CD4-positive, alpha-beta memory T cell (primary cell): ENCODE measurements at regions of chr1 and their contacts with region 1.

Region 1: DNA sequence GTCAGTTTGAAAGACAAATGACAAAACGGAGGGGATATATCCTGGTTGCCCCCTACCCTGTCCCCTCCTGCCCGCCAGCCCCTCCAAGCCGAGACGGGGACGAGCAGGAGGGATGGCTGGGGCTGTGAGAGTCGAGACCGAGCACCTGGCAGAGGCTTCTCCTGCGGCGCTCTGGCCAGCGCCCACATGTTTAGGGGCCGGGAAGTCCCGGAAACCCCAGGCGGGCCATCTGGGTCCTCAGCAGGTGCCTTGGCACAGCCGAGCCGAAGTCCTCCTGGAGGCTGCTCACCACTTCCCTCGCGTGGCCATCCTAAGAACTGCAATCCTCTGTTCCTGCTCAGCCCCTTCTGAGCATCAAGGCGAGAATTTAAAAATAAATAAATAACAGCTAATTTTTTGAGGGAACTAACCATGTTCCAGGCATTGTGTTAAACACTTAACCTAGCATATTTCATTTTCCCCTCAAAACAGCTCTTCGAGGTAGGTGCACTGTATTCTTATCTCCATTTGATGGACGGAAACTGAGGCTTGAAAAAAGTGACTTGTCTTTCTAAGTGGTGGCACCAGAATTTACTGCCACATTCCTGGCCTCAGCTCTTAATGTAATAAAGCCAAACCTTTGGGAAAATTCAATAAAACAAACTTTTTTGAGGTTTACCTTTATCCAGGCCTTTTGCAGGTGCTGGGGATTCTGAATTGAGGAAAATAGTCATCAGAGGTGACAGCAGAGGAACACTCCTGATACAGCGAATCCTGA is 3.5 kb upstream of the RIMS3 start:
- DNase-seq: peak; percentile 73 to 78 (median 76)
- H3K4me3 ChIP-seq: peak overlapping the region in 1 of 2 donors; percentile 38
- H3K4me3 Mint-ChIP-seq: peak overlapping the region in 6 of 8 donors; percentile 10 to 78 (median 53)
- H3K27ac ChIP-seq: no peak overlapping the region
- H3K27ac Mint-ChIP-seq: no peak overlapping the region
- H3K4me1 ChIP-seq: peaks cover 21% of the 10 kb centered on the region
- H3K4me1 Mint-ChIP-seq: peaks cover 4 to 28% (median 13%) of the 10 kb centered on the region in 4 donors
- H3K27me3 ChIP-seq: no peaks in the 10 kb centered on the region
- H3K27me3 Mint-ChIP-seq: no peaks in the 10 kb centered on the region

Region 2: DNA sequence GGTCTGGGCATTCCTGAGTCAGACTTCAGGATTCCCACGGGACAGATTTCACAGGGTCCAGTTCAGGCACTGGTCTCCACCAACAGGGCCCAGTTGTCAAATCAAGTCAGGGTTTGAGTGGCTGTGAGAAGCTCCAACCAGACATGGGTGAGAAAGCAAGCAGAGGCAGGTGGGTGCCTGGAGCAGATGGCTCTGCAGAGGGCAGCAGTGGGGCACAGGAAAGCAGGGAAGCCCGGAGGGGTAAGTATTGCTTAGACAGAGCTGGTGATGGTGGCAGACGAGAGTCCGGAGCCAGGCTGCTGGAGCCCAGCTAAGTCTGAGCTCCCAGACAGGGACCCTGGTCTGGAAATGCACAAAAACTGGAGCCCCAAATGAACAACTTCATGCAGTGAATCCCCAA is 43.9 kb before region 1 on chr1:
- CTCF ChIA-PET with region 1: interaction called, 6 read pairs
- POLR2A ChIA-PET with region 1: no interaction called
- intact Hi-C with region 1: loop called (anchors 5 kb)
- DNase-seq: no peak
- H3K4me3 ChIP-seq: no peak overlapping the region
- H3K4me3 Mint-ChIP-seq: no peak overlapping the region
- H3K27ac ChIP-seq: no peak overlapping the region
- H3K27ac Mint-ChIP-seq: peak overlapping the region in 2 of 7 donors; percentile 4 to 76
- H3K4me1 ChIP-seq: peaks cover 13% of the 10 kb centered on the region
- H3K4me1 Mint-ChIP-seq: peaks cover 6 to 21% (median 13%) of the 10 kb centered on the region in 4 donors
- H3K27me3 ChIP-seq: no peaks in the 10 kb centered on the region
- H3K27me3 Mint-ChIP-seq: no peaks in the 10 kb centered on the region

Region 3: GRCh38 chr1:40679165-40679953 is 10.4 kb after region 1 on chr1:
- CTCF ChIA-PET with region 1: interaction called, 12 read pairs
- POLR2A ChIA-PET with region 1: no interaction called
- intact Hi-C with region 1: no loop called
- DNase-seq: no peak
- H3K4me3 ChIP-seq: no peak overlapping the region
- H3K4me3 Mint-ChIP-seq: no peak overlapping the region
- H3K27ac ChIP-seq: no peak overlapping the region
- H3K27ac Mint-ChIP-seq: no peak overlapping the region
- H3K4me1 ChIP-seq: no peaks in the 10 kb centered on the region
- H3K4me1 Mint-ChIP-seq: no peaks in the 10 kb centered on the region
- H3K27me3 ChIP-seq: no peaks in the 10 kb centered on the region
- H3K27me3 Mint-ChIP-seq: peaks cover 1 to 3% of the 10 kb centered on the region in 2 donors

Region 4: DNA sequence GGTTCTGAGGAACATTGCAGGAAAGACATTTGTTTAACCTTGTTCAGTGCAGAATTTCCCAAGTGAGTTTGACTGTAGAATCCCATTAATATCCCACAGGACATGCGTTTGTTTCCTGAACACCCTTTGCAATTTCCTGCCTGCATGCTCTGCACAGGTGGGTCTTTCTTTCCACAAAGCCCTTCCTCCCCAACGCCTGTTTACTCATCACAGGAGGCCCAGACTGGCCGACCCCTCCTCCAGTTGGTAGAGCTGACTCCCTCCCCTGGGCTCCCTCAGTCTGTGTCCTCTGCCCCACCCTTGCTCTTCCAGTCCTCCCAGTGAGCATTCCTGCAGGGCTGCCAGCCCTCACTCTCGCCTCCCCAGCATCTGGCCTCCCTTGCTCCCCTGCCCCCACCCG is 263.1 kb after region 1 on chr1:
- CTCF ChIA-PET with region 1: no interaction called
- POLR2A ChIA-PET with region 1: no interaction called
- intact Hi-C with region 1: no loop called
- DNase-seq: no peak
- H3K4me3 ChIP-seq: no peak overlapping the region
- H3K4me3 Mint-ChIP-seq: no peak overlapping the region
- H3K27ac ChIP-seq: no peak overlapping the region
- H3K27ac Mint-ChIP-seq: no peak overlapping the region
- H3K4me1 ChIP-seq: no peaks in the 10 kb centered on the region
- H3K4me1 Mint-ChIP-seq: no peaks in the 10 kb centered on the region
- H3K27me3 ChIP-seq: no peaks in the 10 kb centered on the region
- H3K27me3 Mint-ChIP-seq: peaks cover 4 to 7% of the 10 kb centered on the region in 2 donors